ENCODE measurements at regions of chr3 and their contacts with region 1.

Region 1: GRCh38 chr3:152471814-152472671 is 203.3 kb downstream of the MBNL1 start:
- DNase-seq: no peak

Region 2: GRCh38 chr3:152071924-152072323 is 400.1 kb before region 1 on chr3:
- intact Hi-C with region 1: loop called (anchors 10 kb)
- DNase-seq: no peak

Region 3: DNA sequence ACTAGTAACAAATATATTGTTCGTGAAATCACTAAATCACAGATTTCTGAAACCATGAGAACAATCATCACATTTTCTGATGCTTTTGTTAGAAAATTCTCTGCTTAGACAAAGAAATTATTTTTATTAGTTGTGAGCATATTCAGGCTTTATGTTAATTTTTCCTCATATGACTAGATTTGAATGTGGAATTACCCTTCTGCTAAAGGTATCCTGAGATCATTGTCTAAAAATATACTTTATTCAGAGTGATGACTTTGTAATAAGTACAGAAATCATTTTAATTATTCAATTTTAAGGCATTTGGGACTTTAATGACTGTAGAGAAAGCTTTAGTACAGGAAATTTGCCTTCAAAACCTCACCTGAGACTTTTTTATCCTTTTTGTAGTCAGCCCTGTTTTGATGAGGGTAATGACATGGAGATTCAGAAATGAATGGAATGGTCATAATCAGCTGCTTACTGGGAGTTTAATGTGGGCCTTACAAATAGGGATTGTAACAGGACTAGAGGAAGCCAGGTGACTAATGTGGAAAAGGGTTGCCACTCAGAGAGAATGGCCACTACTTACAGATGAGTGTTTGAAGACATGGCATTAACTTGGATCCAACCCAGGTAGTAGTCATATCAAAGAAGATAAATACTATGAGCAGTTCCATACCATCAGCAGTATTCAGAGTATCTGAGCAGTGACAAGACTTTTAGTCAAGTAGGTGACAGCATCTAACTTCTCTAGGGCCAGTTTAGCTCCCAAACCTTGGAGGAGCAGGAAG is 55.0 kb before region 1 on chr3:
- intact Hi-C with region 1: no loop called
- DNase-seq: no peak

Region 4: DNA sequence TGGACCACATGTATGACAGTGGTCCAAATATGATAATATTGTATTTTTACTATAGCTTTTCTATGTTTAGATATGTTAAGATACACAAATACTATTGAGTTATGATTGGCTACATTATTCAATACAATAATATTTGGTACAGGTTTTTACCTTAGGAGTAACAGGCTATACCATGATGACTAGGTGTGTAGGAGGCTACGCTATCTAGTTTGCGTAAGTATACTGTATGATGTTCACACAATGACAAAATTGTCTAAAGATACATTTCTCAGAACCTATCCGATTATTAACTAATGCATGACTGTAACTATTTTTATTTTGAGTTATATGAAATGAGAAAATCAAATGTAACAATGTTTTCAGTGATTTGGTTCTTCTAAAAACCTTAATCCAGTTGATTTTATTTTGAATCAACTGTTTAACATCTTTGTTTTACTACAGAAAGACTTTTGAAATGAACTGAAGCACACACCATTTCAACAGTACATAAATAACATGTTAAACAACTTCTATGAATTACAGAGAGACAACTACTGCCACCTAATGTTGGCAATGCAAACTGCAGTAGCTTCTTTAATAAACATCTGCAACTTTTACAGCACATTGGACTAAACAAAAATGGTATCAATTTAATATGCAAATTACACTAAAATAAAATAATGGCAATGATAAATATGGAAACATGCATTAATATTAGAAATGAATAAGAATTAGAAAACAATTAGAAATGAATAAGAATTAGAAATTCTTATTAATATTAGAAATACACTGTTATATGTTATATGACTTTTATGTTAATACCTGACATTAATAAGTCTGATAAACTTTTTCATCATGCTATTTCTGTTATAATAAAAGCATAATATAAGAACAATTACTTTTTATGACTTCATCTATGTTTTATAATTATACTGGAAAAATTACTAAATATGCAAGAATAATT is 52.4 kb after region 1 on chr3:
- intact Hi-C with region 1: loop called (anchors 5 kb)
- DNase-seq: no peak

Region 5: GRCh38 chr3:152595975-152596790 is 124.1 kb after region 1 on chr3:
- intact Hi-C with region 1: no loop called
- DNase-seq: no peak

Region 6: GRCh38 chr3:152797751-152798432 is 325.8 kb after region 1 on chr3:
- intact Hi-C with region 1: no loop called
- DNase-seq: no peak